CD4-positive, alpha-beta T cell (primary cell): ENCODE measurements at regions of chr1 and their contacts with region 1.

Region 1: DNA sequence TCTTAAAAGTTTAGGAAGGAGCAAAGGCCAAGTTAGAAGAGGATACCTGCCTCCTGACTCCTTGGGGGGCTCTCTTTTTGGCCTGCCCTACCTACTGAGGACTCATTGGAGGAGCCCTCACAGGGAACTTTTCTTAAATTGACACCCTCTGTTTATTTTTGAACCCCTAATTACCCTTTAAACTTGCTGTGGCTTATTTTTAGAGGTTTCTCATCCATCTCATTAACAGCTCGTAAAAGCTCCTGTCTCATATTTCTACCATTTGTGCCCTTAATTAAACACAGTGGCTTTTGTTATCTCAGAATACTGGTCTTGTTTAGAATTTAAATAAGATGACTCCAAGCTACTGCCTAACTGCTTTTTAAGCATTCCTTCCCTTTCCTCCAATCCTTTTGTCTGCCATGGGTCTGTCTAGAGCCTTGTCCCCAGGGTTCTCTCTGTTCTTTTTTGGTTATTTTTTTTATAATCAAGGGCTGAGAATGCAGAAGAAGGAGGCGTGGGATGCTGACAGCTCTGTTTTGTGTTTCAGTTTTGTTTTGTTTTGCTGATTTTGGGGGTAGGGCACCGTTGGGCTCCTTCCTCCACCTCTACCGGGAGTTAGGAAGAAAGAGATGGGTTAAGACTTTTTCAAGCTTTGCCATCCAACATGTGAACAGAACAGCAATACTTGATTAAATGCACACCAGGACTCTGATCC is 78.0 kb downstream of the SYT6 start:
- DNase-seq: no peak
- ATAC-seq: no peak
- H3K4me3 ChIP-seq: no peak overlapping the region
- H3K4me3 Mint-ChIP-seq: no peak overlapping the region
- H3K27ac ChIP-seq: no peak overlapping the region
- H3K27ac Mint-ChIP-seq: no peak overlapping the region
- H3K4me1 ChIP-seq: no peaks in the 10 kb centered on the region
- H3K4me1 Mint-ChIP-seq: peaks cover 4% of the 10 kb centered on the region
- H3K27me3 ChIP-seq: no peaks in the 10 kb centered on the region
- H3K27me3 Mint-ChIP-seq: no peaks in the 10 kb centered on the region
- CTCF ChIP-seq: no peak

Region 2: GRCh38 chr1:114034567-114035303 is 41.0 kb before region 1 on chr1:
- CTCF ChIA-PET with region 1: no interaction called
- POLR2A ChIA-PET with region 1: no interaction called
- intact Hi-C with region 1: loop called in 1 of 2 experiments (anchors 1 kb)
- DNase-seq: no peak
- ATAC-seq: no peak
- H3K4me3 ChIP-seq: no peak overlapping the region
- H3K4me3 Mint-ChIP-seq: no peak overlapping the region
- H3K27ac ChIP-seq: no peak overlapping the region
- H3K27ac Mint-ChIP-seq: no peak overlapping the region
- H3K4me1 ChIP-seq: no peaks in the 10 kb centered on the region
- H3K4me1 Mint-ChIP-seq: no peaks in the 10 kb centered on the region
- H3K27me3 ChIP-seq: no peaks in the 10 kb centered on the region
- H3K27me3 Mint-ChIP-seq: no peaks in the 10 kb centered on the region
- CTCF ChIP-seq: no peak

Region 3: GRCh38 chr1:114093624-114094376 is 18.1 kb after region 1 on chr1:
- CTCF ChIA-PET with region 1: no interaction called
- POLR2A ChIA-PET with region 1: no interaction called
- intact Hi-C with region 1: no loop called
- DNase-seq: peak in 3 of 14 experiments; percentile 10 to 40 (median 20)
- ATAC-seq: no peak
- H3K4me3 ChIP-seq: no peak overlapping the region
- H3K4me3 Mint-ChIP-seq: no peak overlapping the region
- H3K27ac ChIP-seq: no peak overlapping the region
- H3K27ac Mint-ChIP-seq: no peak overlapping the region
- H3K4me1 ChIP-seq: peaks cover 3% of the 10 kb centered on the region
- H3K4me1 Mint-ChIP-seq: no peaks in the 10 kb centered on the region
- H3K27me3 ChIP-seq: no peaks in the 10 kb centered on the region
- H3K27me3 Mint-ChIP-seq: no peaks in the 10 kb centered on the region
- CTCF ChIP-seq: no peak